H1 (cell line): ENCODE measurements at regions of chr2 and their contacts with region 1.

Region 1: DNA sequence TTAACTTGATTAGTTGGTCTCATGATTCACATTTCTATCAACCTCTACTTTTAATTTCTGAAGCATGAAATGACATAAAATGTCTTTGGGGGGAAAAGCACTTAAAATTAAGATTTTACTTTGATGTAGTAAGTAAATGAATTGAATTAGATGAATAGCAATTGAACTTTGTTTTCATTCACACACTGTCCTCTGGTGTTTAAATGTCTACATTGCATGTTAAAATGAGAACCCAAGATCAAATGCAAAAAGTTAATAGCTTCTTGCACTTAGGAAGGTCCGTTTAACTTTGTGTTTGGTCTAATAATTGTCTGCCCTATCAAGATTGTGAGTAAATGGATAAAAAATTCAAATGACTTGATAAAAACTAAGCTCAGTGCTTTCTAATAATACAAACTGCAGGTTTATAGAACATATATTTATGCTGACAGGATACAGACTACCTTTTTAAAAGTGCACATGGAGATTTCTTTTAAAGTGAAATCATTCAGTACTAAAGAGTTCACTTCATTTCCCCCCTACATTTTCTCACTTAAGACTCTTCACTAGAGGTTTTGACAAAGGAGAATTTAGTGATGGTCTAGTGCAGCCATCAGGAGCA is 156.2 kb upstream of the NABP1 start:
- DNase-seq: no peak
- H3K4me3 ChIP-seq: no peak overlapping the region
- H3K27ac ChIP-seq: no peak overlapping the region
- H3K4me1 ChIP-seq: no peaks in the 10 kb centered on the region
- H3K27me3 ChIP-seq: no peaks in the 10 kb centered on the region
- CTCF ChIP-seq: peak in 1 of 3 experiments; percentile 43; a peak in 2 of 4 replicates
- EP300 ChIP-seq: no peak
- POLR2A ChIP-seq: no peak
- RAD21 ChIP-seq: peak in 1 of 2 experiments; percentile 68

Region 2: GRCh38 chr2:191165176-191165643 is 356.5 kb before region 1 on chr2:
- CTCF ChIA-PET with region 1: interaction called, 23 read pairs
- POLR2A ChIA-PET with region 1: no interaction called
- DNase-seq: no peak
- H3K4me3 ChIP-seq: no peak overlapping the region
- H3K27ac ChIP-seq: no peak overlapping the region
- H3K4me1 ChIP-seq: no peaks in the 10 kb centered on the region
- H3K27me3 ChIP-seq: no peaks in the 10 kb centered on the region
- CTCF ChIP-seq: peak in 2 of 3 experiments; percentile 60; a peak in 3 of 4 replicates
- EP300 ChIP-seq: no peak
- POLR2A ChIP-seq: no peak
- RAD21 ChIP-seq: peak; percentile 85 to 87

Region 3: GRCh38 chr2:191508738-191509137 is 13.0 kb before region 1 on chr2:
- CTCF ChIA-PET with region 1: interaction called, 10 read pairs
- POLR2A ChIA-PET with region 1: no interaction called
- DNase-seq: no peak
- H3K4me3 ChIP-seq: no peak overlapping the region
- H3K27ac ChIP-seq: no peak overlapping the region; the same call in 1 of the 2 replicates
- H3K4me1 ChIP-seq: no peaks in the 10 kb centered on the region
- H3K27me3 ChIP-seq: no peaks in the 10 kb centered on the region
- CTCF ChIP-seq: no peak
- EP300 ChIP-seq: no peak
- POLR2A ChIP-seq: no peak
- RAD21 ChIP-seq: no peak